Breast epithelium (tissue), 4 donors: ENCODE measurements at regions of chr17 and their contacts with region 1.

Region 1: GRCh38 chr17:33562792-33563191 is 269.7 kb upstream of the ASIC2 start:
- DNase-seq: no peak
- H3K4me3 ChIP-seq: no peak overlapping the region
- H3K27ac ChIP-seq: peak overlapping the region in 1 of 2 donors; percentile 3
- H3K4me1 ChIP-seq: no peaks in the 10 kb centered on the region
- H3K27me3 ChIP-seq: no peaks in the 10 kb centered on the region
- CTCF ChIP-seq: no peak
- POLR2A ChIP-seq: no peak

Region 2: GRCh38 chr17:33469911-33470310 is 92.9 kb before region 1 on chr17:
- intact Hi-C with region 1: no loop called
- DNase-seq: no peak
- H3K4me3 ChIP-seq: no peak overlapping the region
- H3K27ac ChIP-seq: no peak overlapping the region
- H3K4me1 ChIP-seq: no peaks in the 10 kb centered on the region
- H3K27me3 ChIP-seq: no peaks in the 10 kb centered on the region
- CTCF ChIP-seq: no peak
- POLR2A ChIP-seq: no peak

Region 3: DNA sequence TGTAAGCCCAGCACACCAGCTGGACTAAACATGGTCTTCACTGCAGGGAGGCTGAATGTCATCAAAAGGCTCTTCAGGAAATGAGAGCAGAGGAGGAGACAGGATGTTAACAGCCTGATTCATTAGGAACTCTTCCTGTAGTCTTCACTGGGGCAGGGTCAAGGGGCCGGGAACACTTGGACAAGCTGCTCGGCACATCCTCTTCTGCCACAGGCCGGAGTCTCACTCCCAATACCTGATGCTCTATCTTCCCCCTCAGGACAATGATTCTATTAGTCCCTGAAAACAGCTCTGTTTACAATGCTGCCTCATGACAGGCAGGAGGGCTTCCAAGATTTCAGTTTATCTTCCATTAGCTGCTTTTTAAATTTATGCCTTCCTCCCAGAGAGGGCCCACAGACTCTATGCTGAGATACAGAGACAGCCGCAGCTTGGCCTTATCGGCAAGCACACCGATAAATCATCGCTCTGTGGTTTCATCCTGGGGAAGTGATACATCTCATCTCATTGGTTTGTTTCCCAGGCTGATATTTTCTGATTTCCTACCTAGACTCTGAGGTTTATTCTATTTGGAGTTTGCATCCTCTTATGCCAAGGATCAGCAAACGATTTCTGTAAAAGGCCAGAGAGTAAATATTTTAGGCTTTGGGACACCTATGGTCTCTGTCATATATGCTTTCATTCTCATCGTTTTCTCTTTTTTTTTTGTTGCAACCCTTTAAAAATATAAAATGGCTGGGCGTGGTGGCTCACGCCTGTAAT is 55.7 kb before region 1 on chr17:
- intact Hi-C with region 1: loop called (anchors 2 kb)
- DNase-seq: no peak
- H3K4me3 ChIP-seq: no peak overlapping the region
- H3K27ac ChIP-seq: no peak overlapping the region
- H3K4me1 ChIP-seq: no peaks in the 10 kb centered on the region
- H3K27me3 ChIP-seq: no peaks in the 10 kb centered on the region
- CTCF ChIP-seq: no peak
- POLR2A ChIP-seq: no peak

Region 4: DNA sequence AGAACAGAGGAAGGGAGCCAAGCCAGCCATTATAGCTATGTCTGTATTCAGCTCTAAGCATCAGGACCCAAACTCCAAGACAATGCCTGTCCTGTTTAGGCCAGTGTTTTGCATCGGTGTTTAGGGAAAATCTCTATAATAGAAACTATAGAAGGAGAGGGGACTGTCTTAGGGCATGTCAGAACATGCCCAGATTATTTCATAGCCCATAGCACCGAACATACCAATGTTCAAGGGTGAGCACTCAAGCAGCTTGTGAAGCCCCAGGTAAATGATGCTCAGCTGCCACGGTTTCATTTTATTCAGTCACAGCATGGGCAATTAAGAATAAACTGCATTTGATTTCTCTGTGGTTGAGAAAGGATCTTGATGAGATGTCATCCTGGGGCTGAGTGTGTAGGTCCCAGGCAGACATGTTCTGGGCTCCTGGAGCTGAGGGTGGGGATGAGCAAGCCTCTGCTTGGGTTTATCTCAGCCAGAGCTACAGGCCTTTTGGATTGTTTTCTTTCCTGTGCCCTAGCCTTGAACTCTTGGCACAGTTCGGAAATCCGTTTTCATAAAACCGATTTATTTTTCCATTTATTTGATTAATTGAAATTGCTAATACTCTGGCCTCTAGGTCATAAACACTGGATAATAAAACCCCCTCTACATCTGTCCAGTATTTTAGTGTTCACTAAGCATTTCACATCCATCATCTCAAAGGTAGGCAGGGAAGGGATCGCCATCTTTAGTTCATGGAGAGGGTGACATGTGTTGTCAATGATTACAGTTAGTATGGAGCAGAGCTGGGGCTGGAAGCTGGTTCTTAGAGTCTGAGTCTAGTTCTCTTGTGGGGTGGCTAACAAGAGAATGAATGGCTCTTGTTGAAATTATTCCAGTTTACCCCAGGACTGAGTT is 21.0 kb after region 1 on chr17:
- intact Hi-C with region 1: no loop called
- DNase-seq: no peak
- H3K4me3 ChIP-seq: no peak overlapping the region
- H3K27ac ChIP-seq: no peak overlapping the region
- H3K4me1 ChIP-seq: no peaks in the 10 kb centered on the region
- H3K27me3 ChIP-seq: no peaks in the 10 kb centered on the region
- CTCF ChIP-seq: no peak
- POLR2A ChIP-seq: no peak